ENCODE measurements at regions of chr1 and their contacts with region 1.

Region 1: GRCh38 chr1:172211221-172211620 is 209.3 kb upstream of the C1orf105 start:
- DNase-seq: no peak
- ATAC-seq: no peak
- H3K4me3 ChIP-seq: no peak overlapping the region
- H3K27ac ChIP-seq: no peak overlapping the region
- H3K4me1 ChIP-seq: no peaks in the 10 kb centered on the region
- H3K27me3 ChIP-seq: no peaks in the 10 kb centered on the region
- CTCF ChIP-seq: no peak
- POLR2A ChIP-seq: no peak
- RAD21 ChIP-seq: no peak

Region 2: GRCh38 chr1:172239901-172240300 is 28.7 kb after region 1 on chr1:
- CTCF ChIA-PET with region 1: no interaction called
- POLR2A ChIA-PET with region 1: no interaction called
- dilution Hi-C with region 1: no loop called
- in situ Hi-C with region 1: no loop called
- intact Hi-C with region 1: no loop called
- DNase-seq: no peak
- ATAC-seq: no peak
- H3K4me3 ChIP-seq: no peak overlapping the region
- H3K27ac ChIP-seq: no peak overlapping the region
- H3K4me1 ChIP-seq: no peaks in the 10 kb centered on the region
- H3K27me3 ChIP-seq: no peaks in the 10 kb centered on the region
- CTCF ChIP-seq: no peak
- POLR2A ChIP-seq: no peak
- RAD21 ChIP-seq: no peak

Region 3: GRCh38 chr1:172269644-172270043 is 58.4 kb after region 1 on chr1:
- CTCF ChIA-PET with region 1: no interaction called
- POLR2A ChIA-PET with region 1: interaction called, 18 read pairs
- dilution Hi-C with region 1: no loop called
- in situ Hi-C with region 1: no loop called
- intact Hi-C with region 1: no loop called
- DNase-seq: peak; percentile 66
- ATAC-seq: peak; percentile 74
- H3K4me3 ChIP-seq: no peak overlapping the region
- H3K27ac ChIP-seq: no peak overlapping the region
- H3K4me1 ChIP-seq: peaks cover 2% of the 10 kb centered on the region; the same call in 1 of the 2 replicates
- H3K27me3 ChIP-seq: no peaks in the 10 kb centered on the region
- CTCF ChIP-seq: no peak
- POLR2A ChIP-seq: no peak
- RAD21 ChIP-seq: no peak

Measured in IMR-90 (cell line).